ENCODE measurements at regions of chr5 and their contacts with region 1.

Region 1: DNA sequence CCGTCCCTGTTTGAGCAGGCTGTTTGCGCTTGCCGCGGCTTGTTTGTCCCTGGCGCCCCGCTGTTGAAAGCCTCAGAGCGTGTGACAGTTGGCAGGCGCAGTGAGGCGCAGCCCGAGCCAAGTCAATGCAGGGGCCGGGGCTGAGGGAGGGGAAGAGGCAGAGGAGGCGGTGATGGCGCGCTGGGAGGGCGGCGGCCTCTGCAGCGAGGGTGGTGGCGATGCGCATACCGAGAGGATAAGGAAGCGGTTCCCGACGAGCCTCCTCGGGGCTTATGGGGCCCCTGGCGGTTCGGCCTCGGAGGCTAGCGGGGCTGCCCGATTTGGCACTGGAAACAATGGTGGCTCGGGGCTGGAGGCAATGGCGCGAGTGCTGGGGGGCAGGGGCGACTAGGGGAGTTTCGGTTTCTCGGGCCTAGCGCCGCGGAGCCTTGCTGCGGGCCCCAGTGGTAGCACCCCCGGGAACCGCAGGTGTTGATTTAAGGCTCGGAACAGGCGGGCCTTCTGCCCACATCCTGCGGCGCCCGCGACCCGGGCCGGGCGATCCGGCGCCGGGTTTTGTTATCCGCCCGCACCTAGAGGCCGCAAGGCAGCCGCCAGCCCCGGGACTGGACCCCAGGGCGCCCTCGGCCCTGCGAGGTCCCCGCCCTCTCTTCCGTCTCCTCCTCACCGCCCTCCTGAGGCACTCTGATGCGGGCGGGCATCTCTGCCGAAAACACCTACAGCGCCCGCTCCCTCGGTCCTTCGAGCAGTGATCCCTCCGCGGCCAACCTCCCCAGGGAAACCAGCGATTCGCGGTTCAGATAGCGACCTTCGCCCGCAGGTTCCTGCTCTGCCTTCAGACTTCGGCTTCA is 947 bp upstream of the LNPEP start:
- DNase-seq: peak; percentile 95
- H3K4me3 ChIP-seq: peak overlapping the region; percentile 93 to 95 (median 94)
- H3K27ac ChIP-seq: peak overlapping the region; percentile 91 to 99 (median 98)
- H3K4me1 ChIP-seq: peaks cover 10 to 42% (median 30%) of the 10 kb centered on the region in 4 donors
- H3K27me3 ChIP-seq: no peaks in the 10 kb centered on the region
- CTCF ChIP-seq: peak in 2 of 4 experiments; percentile 13 to 19
- EP300 ChIP-seq: peak in 2 of 4 donors; percentile 33 to 40
- POLR2A ChIP-seq: peak in 1 of 2 donors; percentile 3

Region 2: DNA sequence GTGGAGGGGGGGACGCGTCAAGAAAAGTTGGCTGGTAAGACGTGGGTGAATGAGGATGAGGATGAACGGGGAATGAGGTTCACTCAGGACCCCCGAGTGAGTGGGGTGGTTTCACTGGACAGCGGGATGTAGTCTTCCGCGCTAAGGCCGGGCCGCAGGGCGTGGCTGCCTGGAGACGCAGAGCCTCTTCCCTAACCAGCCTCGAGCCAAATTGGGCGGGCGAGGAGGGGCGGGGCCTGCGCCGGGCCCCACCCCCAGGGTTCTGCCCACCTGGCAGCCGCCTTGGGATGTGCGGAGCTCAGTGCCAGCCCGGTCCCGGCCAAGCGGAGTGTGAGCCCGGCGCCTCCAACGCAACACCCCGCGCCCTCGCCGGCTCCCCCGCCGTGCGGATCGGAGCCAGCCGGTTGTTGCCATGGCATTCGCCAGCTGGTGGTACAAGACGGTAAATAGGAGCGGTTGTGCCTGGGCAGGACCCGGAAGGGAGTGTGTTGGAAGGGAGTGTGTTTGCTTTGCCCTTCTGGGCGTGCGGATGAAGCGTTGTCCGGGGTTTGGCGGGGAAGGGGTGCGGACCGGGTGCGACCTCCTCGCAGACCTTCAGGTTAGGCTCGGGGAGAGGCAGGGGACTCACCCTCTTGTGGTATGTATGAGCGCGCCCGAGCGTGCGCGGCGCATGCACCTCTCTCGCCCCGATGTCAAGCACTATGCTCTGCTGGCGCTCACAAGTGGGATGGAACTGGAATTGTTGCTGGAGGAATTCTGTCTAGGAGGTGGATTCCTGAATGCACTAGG is 272.0 kb before region 1 on chr5:
- intact Hi-C with region 1: loop called (anchors 5 kb)
- DNase-seq: peak; percentile 97
- H3K4me3 ChIP-seq: peak overlapping the region; percentile 92 to 98 (median 94)
- H3K27ac ChIP-seq: peak overlapping the region; percentile 99 to 100 (median 100)
- H3K4me1 ChIP-seq: peaks cover 0 to 44% (median 19%) of the 10 kb centered on the region in 4 donors
- H3K27me3 ChIP-seq: no peaks in the 10 kb centered on the region
- CTCF ChIP-seq: no peak
- EP300 ChIP-seq: no peak
- POLR2A ChIP-seq: peak; percentile 65 to 81

Region 3: DNA sequence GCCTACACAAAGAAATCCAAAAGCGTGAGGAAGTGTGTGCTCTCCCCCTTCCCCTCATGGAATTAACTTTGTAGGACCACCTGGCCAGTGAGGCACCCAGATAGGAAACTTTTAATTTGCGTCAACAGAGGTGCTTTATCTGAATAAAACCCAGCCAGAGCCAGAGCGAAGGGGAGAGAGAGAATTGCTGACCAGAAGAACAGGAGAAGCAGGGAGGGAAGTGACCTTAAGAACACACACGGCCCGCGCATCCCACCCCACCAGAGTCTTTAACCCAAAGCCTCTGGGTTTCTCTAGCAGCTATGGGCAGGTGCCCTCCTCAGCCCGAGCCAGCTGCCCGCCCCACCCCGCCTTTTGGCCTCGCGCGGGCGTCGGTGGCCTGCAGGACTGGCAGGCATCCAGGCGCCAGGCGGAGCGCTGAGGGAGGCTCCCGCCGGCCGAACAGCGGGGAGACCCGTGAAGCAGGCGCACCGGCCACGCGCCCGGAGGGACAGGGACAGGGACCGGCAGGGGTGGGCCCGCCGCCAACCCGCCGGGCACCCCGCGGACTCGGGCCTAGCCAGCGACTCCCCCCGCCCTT is 127.8 kb before region 1 on chr5:
- intact Hi-C with region 1: loop called (anchors 2 kb)
- DNase-seq: peak; percentile 89
- H3K4me3 ChIP-seq: peak overlapping the region; percentile 69 to 99 (median 92)
- H3K27ac ChIP-seq: peak overlapping the region; percentile 93 to 100 (median 98)
- H3K4me1 ChIP-seq: peaks cover 0 to 30% (median 19%) of the 10 kb centered on the region in 4 donors
- H3K27me3 ChIP-seq: no peaks in the 10 kb centered on the region
- CTCF ChIP-seq: no peak
- EP300 ChIP-seq: no peak
- POLR2A ChIP-seq: no peak

Region 4: GRCh38 chr5:96823900-96824351 is 111.0 kb before region 1 on chr5:
- intact Hi-C with region 1: no loop called
- DNase-seq: no peak
- H3K4me3 ChIP-seq: no peak overlapping the region
- H3K27ac ChIP-seq: no peak overlapping the region
- H3K4me1 ChIP-seq: no peaks in the 10 kb centered on the region
- H3K27me3 ChIP-seq: no peaks in the 10 kb centered on the region
- CTCF ChIP-seq: no peak
- EP300 ChIP-seq: no peak
- POLR2A ChIP-seq: no peak

Region 5: GRCh38 chr5:96844476-96844990 is 90.4 kb before region 1 on chr5:
- intact Hi-C with region 1: no loop called
- DNase-seq: no peak
- H3K4me3 ChIP-seq: no peak overlapping the region
- H3K27ac ChIP-seq: no peak overlapping the region
- H3K4me1 ChIP-seq: no peaks in the 10 kb centered on the region
- H3K27me3 ChIP-seq: no peaks in the 10 kb centered on the region
- CTCF ChIP-seq: no peak
- EP300 ChIP-seq: no peak
- POLR2A ChIP-seq: no peak

Region 6: GRCh38 chr5:96984506-96985192 is 49.7 kb after region 1 on chr5:
- intact Hi-C with region 1: loop called (anchors 5 kb)
- DNase-seq: no peak
- H3K4me3 ChIP-seq: no peak overlapping the region
- H3K27ac ChIP-seq: peak overlapping the region in 2 of 4 donors; percentile 32 to 61
- H3K4me1 ChIP-seq: peaks cover 0 to 25% (median 7%) of the 10 kb centered on the region in 4 donors
- H3K27me3 ChIP-seq: no peaks in the 10 kb centered on the region
- CTCF ChIP-seq: no peak
- EP300 ChIP-seq: no peak
- POLR2A ChIP-seq: no peak

Region 7: DNA sequence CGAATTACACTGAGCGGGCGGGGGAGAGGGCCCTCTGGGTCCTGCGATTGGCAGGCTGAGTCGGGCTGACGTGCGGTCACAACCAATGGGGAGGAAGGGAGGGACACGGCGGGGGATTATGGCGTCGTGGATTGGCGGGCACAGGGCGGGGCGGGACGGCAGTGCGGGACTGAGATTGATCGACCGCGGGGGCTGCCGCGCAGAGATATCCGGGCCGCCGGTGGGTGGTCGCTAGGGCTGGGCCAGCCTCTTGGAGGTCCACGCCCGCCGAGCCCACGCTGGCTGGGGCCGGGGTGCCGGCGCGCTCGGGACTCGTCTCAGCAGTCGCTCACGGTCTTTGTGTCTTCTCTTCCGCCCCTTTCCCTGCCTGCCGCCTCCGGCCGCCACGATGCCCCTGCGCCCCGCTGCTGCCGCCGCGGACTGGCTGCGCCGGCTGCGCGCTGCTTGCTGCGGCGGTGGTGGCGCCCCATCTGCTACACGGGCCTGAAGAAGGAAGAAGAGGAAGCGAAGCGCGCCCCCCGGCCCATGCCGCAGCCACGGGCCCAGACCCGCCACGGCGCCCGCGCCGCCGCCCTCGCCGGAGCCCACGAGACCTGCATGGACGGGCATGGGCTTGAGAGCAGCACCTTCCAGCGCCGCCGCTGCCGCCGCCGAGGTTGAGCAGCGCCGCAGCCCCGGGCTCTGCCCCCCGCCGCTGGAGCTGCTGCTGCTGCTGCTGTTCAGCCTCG is 1838.7 kb after region 1 on chr5 and contains the start of gene RGMB:
- intact Hi-C with region 1: loop called (anchors 5 kb)
- DNase-seq: peak; percentile 99
- H3K4me3 ChIP-seq: peak within 1 kb of the TSS; percentile 64 to 93 (median 83)
- H3K27ac ChIP-seq: peak within 1 kb of the TSS; percentile 89 to 97 (median 96)
- H3K4me1 ChIP-seq: peaks cover 0 to 48% (median 32%) of the 10 kb centered on the region in 4 donors
- H3K27me3 ChIP-seq: no peaks in the 10 kb centered on the region
- CTCF ChIP-seq: no peak
- EP300 ChIP-seq: no peak
- POLR2A ChIP-seq: peak; percentile 66 to 73
- total RNA-seq, gene RGMB: 23.3 to 32.1 (median 25.0) TPM

Measured in sigmoid colon (tissue), 7 donors.